Common myeloid progenitor, CD34-positive (primary cell): ENCODE measurements at regions of chr19 and their contacts with region 1.

Region 1: DNA sequence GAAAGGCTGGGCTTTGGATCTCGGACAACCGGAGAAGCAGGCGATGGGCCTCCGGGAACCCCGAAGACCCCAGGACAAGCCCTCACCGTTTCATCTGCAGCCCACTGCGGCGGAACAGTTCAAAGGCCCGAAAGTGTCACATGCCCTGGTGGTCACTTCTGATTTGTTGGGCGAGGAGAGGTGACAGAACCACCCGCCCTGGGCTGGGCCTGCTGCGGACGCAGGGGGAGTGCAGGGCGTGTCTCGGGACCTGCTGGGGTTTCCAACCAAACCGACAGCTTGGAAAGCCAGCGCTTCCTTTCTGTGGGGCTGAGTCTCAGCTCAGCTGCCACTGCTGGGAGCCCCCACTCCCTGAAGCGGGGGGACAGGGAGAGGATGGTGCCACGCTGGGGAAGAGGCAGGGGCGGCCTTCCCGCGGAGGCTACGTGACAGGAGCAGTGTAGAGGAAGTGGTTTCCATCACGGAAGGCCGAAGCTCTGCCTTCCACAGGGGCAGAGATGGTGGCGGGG is 22.8 kb upstream of the ZBTB7A start:
- DNase-seq: peak; percentile 63 to 85 (median 83)
- H3K4me3 ChIP-seq: peak overlapping the region; percentile 15 to 60 (median 35)
- H3K27ac ChIP-seq: peak overlapping the region in 1 of 2 experiments; percentile 72
- H3K4me1 ChIP-seq: peaks cover 0 to 46% (median 39%) of the 10 kb centered on the region in 4 experiments
- H3K27me3 ChIP-seq: no peaks in the 10 kb centered on the region

Region 2: GRCh38 chr19:4103073-4103418 is 13.6 kb after region 1 on chr19:
- CTCF ChIA-PET with region 1: interaction called, 10 read pairs
- POLR2A ChIA-PET with region 1: interaction called, 3 read pairs
- DNase-seq: peak in 1 of 3 donors; percentile 10
- H3K4me3 ChIP-seq: no peak overlapping the region
- H3K27ac ChIP-seq: no peak overlapping the region
- H3K4me1 ChIP-seq: peaks cover 0 to 31% (median 25%) of the 10 kb centered on the region in 4 experiments
- H3K27me3 ChIP-seq: no peaks in the 10 kb centered on the region

Region 3: DNA sequence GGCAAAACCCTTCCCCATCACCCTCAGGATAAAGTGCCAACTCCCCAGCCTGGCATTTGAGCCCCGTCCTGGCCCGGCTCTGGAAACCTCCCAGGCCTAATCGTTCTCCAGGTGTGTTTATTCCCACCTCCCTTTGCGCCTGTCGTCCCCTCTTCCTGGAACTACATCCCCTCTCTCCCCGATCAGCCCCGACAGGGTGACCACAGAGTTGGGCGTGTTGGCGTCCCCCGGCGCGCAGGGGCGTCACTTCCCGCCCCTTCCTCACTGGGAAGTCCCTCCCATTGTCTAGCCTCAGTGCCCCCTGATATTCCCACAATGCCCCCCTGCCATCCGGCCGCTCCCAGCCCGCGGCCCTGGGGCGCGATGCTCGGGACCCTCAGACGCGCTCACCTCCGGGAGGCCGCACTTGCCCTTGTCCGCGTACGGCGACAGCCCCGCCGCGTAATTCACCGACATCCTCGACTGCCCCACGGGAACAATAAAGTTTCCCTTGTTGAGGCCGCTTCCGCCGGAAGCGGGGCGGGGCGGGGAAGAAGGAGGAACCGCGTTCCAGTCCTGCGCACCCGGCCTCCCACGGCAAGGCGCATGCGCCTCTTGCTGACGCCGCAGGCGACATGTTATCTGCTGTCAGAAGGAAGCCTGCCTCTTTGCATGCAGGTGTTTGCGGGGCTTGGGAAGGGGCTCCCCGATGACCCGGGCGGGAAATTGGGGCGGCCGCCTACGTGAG is 92.8 kb after region 1 on chr19 and contains the starts of genes ANKRD24 and SIRT6:
- CTCF ChIA-PET with region 1: no interaction called
- POLR2A ChIA-PET with region 1: no interaction called
- DNase-seq: peak; percentile 96 to 98 (median 98)
- H3K4me3 ChIP-seq: peak within 1 kb of the TSS; percentile 53 to 98 (median 93)
- H3K27ac ChIP-seq: peak within 1 kb of the TSS; percentile 70 to 82
- H3K4me1 ChIP-seq: peaks cover 0 to 27% (median 16%) of the 10 kb centered on the region in 4 experiments
- H3K27me3 ChIP-seq: peaks cover 0 to 3% (median 0%) of the 10 kb centered on the region in 5 experiments